Gastrocnemius medialis (tissue), 4 donors: ENCODE measurements at regions of chr18 and their contacts with region 1.

Region 1: GRCh38 chr18:8988261-8988871 is 114.1 kb upstream of the NDUFV2 start:
- DNase-seq: peak in 1 of 2 donors; percentile 36
- ATAC-seq: peak; percentile 35 to 53
- H3K4me3 ChIP-seq: no peak overlapping the region
- H3K27ac ChIP-seq: no peak overlapping the region
- H3K4me1 ChIP-seq: peaks cover 0 to 5% of the 10 kb centered on the region in 2 donors
- H3K27me3 ChIP-seq: no peaks in the 10 kb centered on the region
- CTCF ChIP-seq: peak; percentile 46 to 77 (median 63)
- POLR2A ChIP-seq: no peak

Region 2: GRCh38 chr18:8478166-8478967 is 510.0 kb before region 1 on chr18:
- in situ Hi-C with region 1: loop called in 1 of 4 experiments (anchors 25 kb)
- intact Hi-C with region 1: loop called (anchors 5 kb)
- DNase-seq: peak; percentile 29 to 36
- ATAC-seq: peak; percentile 67 to 84
- H3K4me3 ChIP-seq: no peak overlapping the region
- H3K27ac ChIP-seq: no peak overlapping the region
- H3K4me1 ChIP-seq: no peaks in the 10 kb centered on the region
- H3K27me3 ChIP-seq: no peaks in the 10 kb centered on the region
- CTCF ChIP-seq: peak; percentile 50 to 83 (median 76)
- POLR2A ChIP-seq: no peak

Region 3: GRCh38 chr18:8685141-8685913 is 303.0 kb before region 1 on chr18:
- in situ Hi-C with region 1: loop called (anchors 5 to 10 kb)
- intact Hi-C with region 1: no loop called
- DNase-seq: no peak
- ATAC-seq: no peak
- H3K4me3 ChIP-seq: no peak overlapping the region
- H3K27ac ChIP-seq: no peak overlapping the region
- H3K4me1 ChIP-seq: no peaks in the 10 kb centered on the region
- H3K27me3 ChIP-seq: no peaks in the 10 kb centered on the region
- CTCF ChIP-seq: no peak
- POLR2A ChIP-seq: no peak

Region 4: GRCh38 chr18:8704361-8705279 is 283.7 kb before region 1 on chr18:
- in situ Hi-C with region 1: loop called in 1 of 4 experiments (anchors 10 kb)
- intact Hi-C with region 1: loop called (anchors 1 kb)
- DNase-seq: peak; percentile 81
- ATAC-seq: peak; percentile 72 to 83
- H3K4me3 ChIP-seq: peak overlapping the region; percentile 73 to 90 (median 80)
- H3K27ac ChIP-seq: peak overlapping the region; percentile 94
- H3K4me1 ChIP-seq: peaks cover 15% of the 10 kb centered on the region in 2 donors
- H3K27me3 ChIP-seq: no peaks in the 10 kb centered on the region
- CTCF ChIP-seq: peak in 3 of 5 experiments; percentile 8 to 13 (median 12)
- POLR2A ChIP-seq: peak; percentile 72 to 75

Region 5: DNA sequence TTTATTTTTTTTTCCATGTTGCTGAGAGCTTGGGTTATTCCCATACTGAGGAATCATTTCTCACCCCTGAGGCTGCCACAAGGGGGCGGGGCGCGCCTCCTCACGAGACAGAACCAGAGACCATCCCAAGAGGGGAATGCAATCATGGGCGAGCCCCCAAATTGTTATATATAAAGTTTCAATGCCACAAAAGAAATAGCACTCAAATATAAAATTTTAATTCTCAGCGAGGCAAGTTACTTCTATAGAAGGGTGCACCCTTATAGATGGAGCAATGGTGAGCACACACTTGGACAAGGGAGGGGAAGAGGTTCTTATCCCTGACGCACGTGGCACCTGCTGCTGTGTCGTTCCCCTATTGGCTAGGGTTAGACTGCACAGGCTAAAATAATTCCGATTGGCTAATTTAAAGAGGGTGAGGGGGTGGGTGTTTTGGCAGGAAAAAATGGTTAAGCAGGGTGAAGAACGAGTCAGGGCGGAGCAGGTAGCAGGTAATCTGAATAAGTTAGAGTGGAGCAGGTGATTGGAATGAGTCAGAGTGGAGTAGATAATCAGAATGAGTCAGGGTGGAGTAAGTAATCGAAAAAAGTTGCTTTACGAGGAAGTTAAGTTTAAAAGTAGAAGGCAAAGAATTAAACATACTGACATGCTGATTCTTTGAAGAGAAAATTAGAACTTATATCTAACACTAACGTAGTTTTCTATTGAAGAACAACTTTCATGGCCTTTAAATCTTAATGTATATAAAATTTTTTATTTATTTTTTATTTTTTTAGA is 105.5 kb before region 1 on chr18:
- in situ Hi-C with region 1: no loop called
- intact Hi-C with region 1: no loop called
- DNase-seq: no peak
- ATAC-seq: no peak
- H3K4me3 ChIP-seq: no peak overlapping the region
- H3K27ac ChIP-seq: no peak overlapping the region
- H3K4me1 ChIP-seq: no peaks in the 10 kb centered on the region
- H3K27me3 ChIP-seq: no peaks in the 10 kb centered on the region
- CTCF ChIP-seq: no peak
- POLR2A ChIP-seq: no peak

Region 6: DNA sequence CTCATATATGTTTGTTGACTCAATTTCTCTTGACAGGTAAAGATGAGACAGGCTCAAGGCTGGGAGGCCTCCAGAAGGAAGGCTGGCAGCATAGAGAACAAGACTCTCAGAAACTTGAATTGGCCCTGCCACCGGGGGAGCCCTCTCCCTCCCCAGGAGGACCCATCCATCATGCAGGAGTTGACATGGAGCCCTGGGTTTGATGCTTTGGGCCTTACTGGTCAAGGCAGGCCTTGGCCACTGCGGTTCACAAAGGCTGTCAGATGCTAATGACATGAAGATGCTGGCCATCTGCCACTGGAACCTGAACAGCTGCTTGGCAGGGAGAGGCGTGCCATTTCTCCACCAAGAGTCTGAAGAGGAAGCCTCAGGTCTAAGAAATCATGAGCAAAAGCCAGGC is 89.4 kb before region 1 on chr18:
- in situ Hi-C with region 1: no loop called
- intact Hi-C with region 1: no loop called
- DNase-seq: no peak
- ATAC-seq: no peak
- H3K4me3 ChIP-seq: no peak overlapping the region
- H3K27ac ChIP-seq: no peak overlapping the region
- H3K4me1 ChIP-seq: no peaks in the 10 kb centered on the region
- H3K27me3 ChIP-seq: no peaks in the 10 kb centered on the region
- CTCF ChIP-seq: no peak
- POLR2A ChIP-seq: no peak

Region 7: DNA sequence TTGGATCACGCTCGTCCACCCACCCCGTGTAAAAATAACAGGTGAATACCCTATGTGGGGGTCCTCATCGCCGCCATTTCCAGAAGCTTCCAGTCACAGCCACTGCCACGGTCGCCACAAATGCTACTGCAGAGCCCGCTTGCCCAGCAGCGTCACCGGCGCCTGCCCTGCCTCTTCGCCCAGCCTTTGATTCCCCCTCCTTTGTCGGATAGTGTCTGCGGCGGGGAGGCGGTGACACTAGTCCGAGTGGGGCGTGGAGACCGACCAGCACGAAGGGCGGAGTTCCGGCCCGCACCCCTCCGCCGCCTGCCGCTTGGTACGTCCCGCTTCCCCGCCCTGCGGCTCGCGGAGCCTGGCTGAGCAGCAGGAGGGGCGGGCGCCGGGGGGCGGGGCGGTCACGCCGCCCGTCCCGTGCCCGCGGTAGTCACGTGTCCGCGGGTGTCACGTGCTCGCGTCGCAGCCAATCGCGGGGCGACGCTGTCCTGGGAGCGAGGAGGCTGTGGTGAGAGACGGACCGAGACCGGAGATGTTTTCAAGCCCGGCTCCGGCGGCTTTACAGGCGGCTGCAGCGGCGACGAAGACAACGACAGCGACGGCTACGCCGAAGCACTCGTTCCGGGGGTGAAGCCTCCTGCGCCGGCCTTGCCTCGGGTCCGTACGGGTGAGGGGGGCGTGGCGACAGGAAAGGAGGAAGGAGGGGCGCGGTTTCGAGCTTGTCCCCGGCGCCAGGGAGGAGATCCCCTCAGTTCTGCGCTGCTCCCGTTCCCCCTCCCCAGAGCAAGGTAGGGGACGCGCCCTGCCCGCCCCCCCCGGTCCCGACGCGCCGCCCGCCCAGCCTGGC is 148.2 kb after region 1 on chr18 and contains the start of gene ANKRD12:
- in situ Hi-C with region 1: no loop called
- intact Hi-C with region 1: loop called (anchors 5 kb)
- DNase-seq: peak; percentile 96 to 97
- ATAC-seq: peak; percentile 72 to 75
- H3K4me3 ChIP-seq: peak within 1 kb of the TSS; percentile 83 to 89 (median 86)
- H3K27ac ChIP-seq: peak within 1 kb of the TSS; percentile 97 to 98 (median 98)
- H3K4me1 ChIP-seq: peaks cover 58 to 64% of the 10 kb centered on the region in 2 donors
- H3K27me3 ChIP-seq: no peaks in the 10 kb centered on the region
- CTCF ChIP-seq: peak in 1 of 5 experiments; percentile 14
- POLR2A ChIP-seq: peak; percentile 93 to 94
- total RNA-seq, gene ANKRD12: 26.9 to 40.1 (median 36.7) TPM

Region 8: GRCh38 chr18:9297007-9297393 is 308.6 kb after region 1 on chr18:
- in situ Hi-C with region 1: no loop called
- intact Hi-C with region 1: no loop called
- DNase-seq: no peak
- ATAC-seq: no peak
- H3K4me3 ChIP-seq: no peak overlapping the region
- H3K27ac ChIP-seq: no peak overlapping the region
- H3K4me1 ChIP-seq: no peaks in the 10 kb centered on the region
- H3K27me3 ChIP-seq: no peaks in the 10 kb centered on the region
- CTCF ChIP-seq: no peak
- POLR2A ChIP-seq: no peak